Esophagus muscularis mucosa (tissue), 4 donors: ENCODE measurements at regions of chr10 and their contacts with region 1.

Region 1: DNA sequence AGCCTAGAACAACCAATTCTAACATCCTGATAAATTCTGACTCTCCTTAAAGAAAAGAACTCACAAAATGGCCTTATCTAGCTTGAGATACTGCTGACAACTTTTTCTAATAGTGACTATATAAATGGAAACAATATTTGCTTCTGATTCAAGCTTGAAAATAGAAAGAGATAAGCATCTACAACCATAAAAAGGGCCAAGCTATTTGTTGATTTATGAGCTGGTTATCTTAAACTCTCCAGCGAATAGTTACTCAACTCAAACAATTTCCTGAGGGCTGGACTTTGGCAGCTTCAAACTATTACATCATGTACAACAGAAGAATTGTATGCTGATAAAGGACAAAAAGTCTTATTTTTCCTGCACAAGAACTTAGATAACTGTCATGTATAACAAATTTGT is 4.6 kb downstream of the USP54 start:
- DNase-seq: no peak
- H3K4me3 ChIP-seq: no peak overlapping the region
- H3K27ac ChIP-seq: peak overlapping the region; percentile 50 to 69 (median 58)
- H3K4me1 ChIP-seq: peaks cover 29 to 57% (median 50%) of the 10 kb centered on the region in 4 donors
- H3K27me3 ChIP-seq: no peaks in the 10 kb centered on the region
- CTCF ChIP-seq: no peak
- EP300 ChIP-seq: no peak
- POLR2A ChIP-seq: no peak

Region 2: DNA sequence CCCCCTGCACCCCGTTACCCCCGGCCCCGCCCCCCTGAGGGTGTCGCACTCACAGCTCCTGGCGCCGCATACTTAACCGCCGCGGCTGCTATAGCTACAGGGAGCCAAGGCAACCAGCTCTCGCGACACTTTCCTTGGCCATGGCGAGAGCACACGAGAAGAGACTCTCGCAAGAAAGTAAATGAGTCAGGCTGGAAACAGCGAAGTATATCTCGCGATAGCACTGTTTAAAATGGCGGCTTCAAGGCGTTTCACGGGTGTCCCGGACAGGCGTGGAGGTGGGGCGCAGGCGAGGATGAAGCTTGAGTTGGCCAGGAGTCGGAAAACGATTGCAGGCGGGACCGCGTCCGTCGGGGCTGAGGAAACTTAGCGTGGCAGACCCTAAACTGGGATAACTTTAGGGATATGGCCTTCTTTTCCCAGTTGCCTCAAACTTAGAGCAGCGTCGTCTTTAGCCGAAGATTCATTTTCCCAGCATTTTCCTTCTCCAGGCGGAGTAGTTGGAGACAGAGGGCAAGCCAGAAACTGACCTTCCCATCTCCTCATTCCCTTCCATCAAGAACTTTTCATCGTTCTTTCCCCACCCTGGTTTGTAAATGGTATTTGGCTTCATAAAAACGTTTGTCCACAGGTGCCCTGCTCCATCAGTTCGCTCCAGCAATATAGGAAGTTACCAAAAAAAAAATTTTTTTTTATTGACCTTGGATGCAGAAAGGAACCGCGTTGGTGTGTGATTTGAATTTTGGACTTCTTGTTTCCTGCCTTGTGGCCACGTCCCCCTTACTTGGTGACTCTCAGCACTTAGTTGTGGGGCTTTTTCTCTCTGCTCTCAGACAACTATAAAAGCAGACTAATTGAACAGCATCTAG is 39.5 kb after region 1 on chr10:
- intact Hi-C with region 1: loop called (anchors 5 kb)
- DNase-seq: peak; percentile 95
- H3K4me3 ChIP-seq: peak overlapping the region; percentile 69 to 95 (median 82)
- H3K27ac ChIP-seq: peak overlapping the region; percentile 81 to 89 (median 82)
- H3K4me1 ChIP-seq: peaks cover 11 to 17% (median 16%) of the 10 kb centered on the region in 4 donors
- H3K27me3 ChIP-seq: no peaks in the 10 kb centered on the region
- CTCF ChIP-seq: peak in 1 of 3 experiments; percentile 12
- EP300 ChIP-seq: no peak
- POLR2A ChIP-seq: no peak